ENCODE measurements at regions of chr4 and their contacts with region 1.

Region 1: DNA sequence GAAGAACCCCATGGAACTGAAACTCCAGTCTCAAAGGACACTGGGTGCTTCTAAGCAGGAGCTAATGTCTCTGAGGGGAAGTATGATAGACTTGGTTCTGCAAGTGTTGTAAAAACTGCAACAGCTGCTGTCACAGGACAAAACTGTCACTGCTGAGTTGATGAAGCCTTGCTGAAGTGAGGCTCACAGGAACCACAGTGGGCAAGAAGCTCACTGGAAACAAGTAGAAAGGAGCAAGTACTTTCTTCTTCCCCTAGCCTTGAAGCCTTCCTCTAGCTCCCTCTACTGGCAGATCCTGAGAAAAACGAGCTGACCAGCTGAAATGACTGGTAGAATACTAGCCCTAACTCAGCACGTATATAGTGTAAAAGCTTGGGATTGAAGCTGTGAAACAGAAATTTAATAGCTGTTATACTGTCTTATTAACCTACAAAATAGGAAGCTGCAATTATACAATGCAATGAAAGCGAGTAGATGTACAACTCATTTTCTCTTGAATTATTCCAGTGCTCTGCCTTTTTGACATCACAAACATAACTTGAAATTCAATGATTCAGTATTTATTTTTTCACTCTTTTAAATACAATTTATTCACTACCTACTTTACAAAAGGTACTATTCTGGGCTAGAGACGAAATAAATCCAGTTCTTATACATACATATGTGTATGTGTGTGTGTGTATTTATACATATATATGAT is 91.4 kb downstream of the GABRB1 start:
- DNase-seq: peak in 4 of 5 donors; percentile 24 to 44 (median 24)
- ATAC-seq: peak; percentile 52 to 76 (median 64)
- H3K4me3 ChIP-seq: no peak overlapping the region
- H3K27ac ChIP-seq: no peak overlapping the region
- H3K4me1 ChIP-seq: peaks cover 0 to 3% (median 0%) of the 10 kb centered on the region in 12 donors
- H3K27me3 ChIP-seq: no peaks in the 10 kb centered on the region
- CTCF ChIP-seq: peak; percentile 58 to 89 (median 73)
- POLR2A ChIP-seq: no peak

Region 2: DNA sequence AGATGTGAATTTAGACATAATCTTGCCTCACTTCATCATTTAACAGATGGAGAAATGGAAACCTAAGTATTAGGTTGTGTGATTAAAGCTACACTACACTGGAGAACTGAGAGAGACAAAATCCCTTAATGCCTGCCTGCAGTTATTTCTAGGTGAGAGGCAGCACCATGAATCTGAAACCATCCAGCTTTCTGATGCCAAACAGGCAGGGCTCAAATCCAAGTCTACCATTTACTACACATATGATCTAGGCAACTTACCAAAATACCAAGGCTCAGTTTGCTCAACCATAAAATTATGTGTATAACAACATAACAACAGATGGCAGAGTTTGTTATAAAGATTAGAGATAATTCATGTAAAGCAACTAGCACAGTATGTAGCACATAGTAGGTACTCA is 168.1 kb before region 1 on chr4:
- intact Hi-C with region 1: loop called in 1 of 10 experiments (anchors 10 kb)
- DNase-seq: no peak
- ATAC-seq: no peak
- H3K4me3 ChIP-seq: no peak overlapping the region
- H3K27ac ChIP-seq: no peak overlapping the region
- H3K4me1 ChIP-seq: peaks cover 0 to 19% (median 2%) of the 10 kb centered on the region in 12 donors
- H3K27me3 ChIP-seq: no peaks in the 10 kb centered on the region
- CTCF ChIP-seq: no peak
- POLR2A ChIP-seq: no peak